Left colon (tissue), 2 donors: ENCODE measurements at regions of chr7 and their contacts with region 1.

Region 1: DNA sequence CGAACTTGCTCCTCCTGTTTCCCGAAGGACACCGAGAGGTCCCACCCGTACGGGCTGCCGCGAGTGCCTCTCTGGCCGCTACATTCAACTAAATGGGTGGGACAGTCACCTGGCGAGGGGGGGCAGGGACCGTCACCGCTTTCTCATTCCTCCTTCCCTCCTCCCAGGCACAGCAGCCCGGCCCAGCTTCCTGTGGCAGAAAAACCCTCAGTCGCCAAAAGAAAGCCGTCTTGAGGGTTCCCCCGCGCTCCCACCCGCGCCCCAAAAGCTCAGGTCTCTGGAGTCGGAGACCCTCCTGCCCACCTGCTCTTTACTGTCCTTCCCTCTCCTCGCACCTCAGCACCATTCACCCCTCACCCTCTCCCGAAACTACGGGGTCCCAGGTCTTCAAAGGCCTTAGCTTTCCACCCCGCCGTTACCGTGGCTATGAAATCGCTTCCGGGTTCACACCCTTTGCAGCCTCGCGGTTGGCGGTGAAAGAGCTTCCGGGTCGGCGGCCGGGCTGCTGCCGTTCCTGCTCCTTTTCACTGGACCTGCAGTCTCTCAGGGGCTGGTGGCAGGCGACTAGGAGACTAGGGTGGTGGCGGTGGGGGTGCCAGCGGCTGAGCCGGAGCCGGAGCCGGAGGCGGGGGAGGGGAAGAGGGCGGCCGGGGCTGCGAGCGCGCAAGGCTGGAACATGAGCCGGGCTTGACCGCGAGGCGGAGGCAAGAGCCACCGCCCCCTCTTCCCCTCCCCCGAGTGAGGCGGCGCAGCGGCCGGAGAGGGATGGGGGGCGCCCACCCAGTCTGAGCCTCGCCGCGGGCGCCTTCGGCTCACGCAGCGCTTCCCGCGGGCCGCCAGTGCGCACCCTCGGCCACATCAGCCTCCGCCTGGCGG is at the starts of genes ANKIB1 and KRIT1:
- DNase-seq: peak; percentile 89 to 91
- ATAC-seq: peak; percentile 91
- total RNA-seq, gene ANKIB1: 40.9 to 46.0 TPM
- total RNA-seq, gene KRIT1: 34.6 to 37.2 TPM

Region 2: DNA sequence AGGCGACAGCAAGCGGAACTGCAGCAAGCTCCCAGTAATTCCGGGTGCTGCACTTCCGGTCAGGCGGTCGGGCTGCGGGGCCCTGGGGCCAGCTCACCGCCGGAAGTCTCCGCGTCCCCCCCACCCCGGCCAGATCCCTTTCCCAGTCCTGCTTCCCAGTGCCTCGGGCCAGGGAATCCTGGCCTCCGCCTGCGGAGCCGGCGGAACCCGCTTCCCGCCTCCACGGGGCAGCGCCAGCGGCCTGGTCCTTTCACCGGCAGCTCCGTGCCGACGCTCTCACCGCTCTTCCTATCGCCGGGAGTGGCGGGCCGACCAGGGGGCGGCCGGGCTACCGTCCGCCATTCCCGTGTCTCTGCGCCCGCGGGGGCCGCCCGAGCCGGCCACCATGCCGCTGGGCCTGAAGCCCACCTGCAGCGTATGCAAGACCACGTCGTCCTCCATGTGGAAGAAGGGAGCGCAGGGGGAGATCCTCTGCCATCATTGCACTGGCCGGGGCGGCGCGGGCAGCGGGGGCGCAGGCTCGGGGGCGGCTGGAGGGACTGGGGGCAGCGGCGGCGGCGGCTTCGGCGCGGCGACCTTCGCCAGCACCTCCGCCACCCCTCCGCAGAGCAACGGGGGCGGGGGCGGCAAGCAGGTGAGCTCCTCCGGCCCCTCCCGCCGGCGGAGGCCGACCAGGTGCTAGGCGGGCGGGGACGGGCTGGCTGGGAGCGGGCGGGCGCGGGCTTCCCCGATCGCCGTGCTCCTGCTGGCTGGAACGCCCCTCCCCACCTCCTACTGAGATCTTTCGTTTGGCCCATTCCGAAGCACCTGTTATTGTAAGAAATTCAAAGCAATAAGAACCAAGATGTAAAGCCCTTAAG is 201.8 kb after region 1 on chr7 and contains the start of gene GATAD1:
- intact Hi-C with region 1: loop called in 1 of 2 experiments (anchors 5 kb)
- DNase-seq: peak; percentile 91 to 93
- ATAC-seq: peak; percentile 89
- total RNA-seq, gene GATAD1: 29.7 to 34.3 TPM